HEK293 (cell line): ENCODE measurements at regions of chr3 and their contacts with region 1.

Region 1: GRCh38 chr3:9915254-9916141 is 1.4 kb upstream of the IL17RC start:
- H3K4me3 ChIP-seq: peak overlapping the region; percentile 4
- H3K27ac ChIP-seq: peak overlapping the region; percentile 54; the same call in 1 of the 2 replicates
- H3K4me1 ChIP-seq: peaks cover 19% of the 10 kb centered on the region
- CTCF ChIP-seq: no peak

Region 2: DNA sequence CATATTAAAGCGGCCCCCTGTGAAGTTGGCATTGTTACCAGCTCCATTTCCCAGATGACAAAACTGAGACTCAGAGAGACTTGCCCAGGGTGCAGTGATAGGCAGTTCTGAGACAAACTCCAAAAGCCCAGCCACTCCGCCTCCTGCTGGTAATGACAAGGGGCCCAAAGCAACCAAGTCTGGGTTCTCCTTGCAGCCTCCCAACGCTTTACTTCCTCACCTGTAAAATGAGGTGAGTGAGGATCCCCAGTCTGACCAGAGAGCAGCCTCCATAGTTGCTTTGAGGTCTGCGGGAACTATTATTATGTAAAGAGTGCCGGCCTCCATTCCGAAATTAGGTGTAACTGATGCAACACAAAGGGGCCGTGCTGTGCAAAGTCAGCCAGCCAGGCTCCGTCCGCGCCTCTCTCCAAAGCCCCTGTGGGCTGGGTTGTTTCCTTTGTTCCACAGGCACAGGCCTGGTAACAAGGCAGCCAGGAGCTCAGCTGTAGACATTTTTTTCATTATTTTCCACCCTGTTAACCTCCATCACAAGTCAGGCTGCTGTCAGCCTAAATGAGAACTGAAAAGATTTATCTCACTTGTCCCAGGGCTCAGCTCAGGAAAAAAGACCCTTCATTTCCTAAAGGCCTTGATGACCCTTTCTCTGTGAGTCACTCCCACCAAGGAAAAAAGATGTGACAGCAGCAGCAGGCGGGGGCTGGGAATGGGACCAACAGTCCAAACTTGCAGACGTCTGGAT is 813.1 kb before region 1 on chr3:
- CTCF ChIA-PET with region 1: no interaction called
- POLR2A ChIA-PET with region 1: no interaction called
- H3K4me3 ChIP-seq: no peak overlapping the region
- H3K27ac ChIP-seq: no peak overlapping the region
- H3K4me1 ChIP-seq: peaks cover 3% of the 10 kb centered on the region; the same call in 1 of the 2 replicates
- CTCF ChIP-seq: no peak

Region 3: DNA sequence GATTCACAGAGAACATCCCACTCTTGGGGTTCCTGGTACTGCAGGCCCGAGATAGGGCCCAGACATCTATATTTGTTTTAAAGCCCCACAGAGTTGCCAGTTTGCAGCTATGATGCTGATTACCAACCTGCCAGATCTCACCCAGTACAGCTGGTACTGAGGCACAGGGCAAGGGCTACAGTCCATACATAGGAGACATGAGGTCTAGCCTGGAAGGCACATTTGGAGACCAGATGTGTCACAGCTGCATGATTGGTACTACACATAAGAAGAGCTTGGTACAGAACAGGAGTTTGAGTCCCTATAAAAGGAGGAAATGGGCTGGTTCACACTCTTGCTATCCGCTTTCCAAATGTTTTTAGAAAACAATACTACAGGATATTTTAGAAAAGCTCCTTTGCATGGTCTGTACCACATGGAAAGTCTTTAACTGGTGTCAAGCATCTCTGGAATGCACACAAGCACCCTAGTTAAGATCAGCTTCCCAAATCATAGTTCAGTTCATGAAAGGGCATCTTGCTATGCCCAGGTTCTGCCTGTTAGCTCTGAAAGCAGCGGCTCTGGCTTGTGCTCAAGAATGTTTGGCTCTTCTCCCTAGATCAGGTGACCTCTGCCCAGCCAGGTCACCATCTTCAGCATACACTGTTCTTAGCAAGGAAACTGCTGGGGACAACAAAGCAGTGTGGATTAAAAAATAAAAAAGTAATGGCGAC is 245.6 kb before region 1 on chr3:
- CTCF ChIA-PET with region 1: no interaction called
- POLR2A ChIA-PET with region 1: no interaction called
- H3K4me3 ChIP-seq: no peak overlapping the region
- H3K27ac ChIP-seq: no peak overlapping the region
- H3K4me1 ChIP-seq: no peaks in the 10 kb centered on the region
- CTCF ChIP-seq: no peak

Region 4: DNA sequence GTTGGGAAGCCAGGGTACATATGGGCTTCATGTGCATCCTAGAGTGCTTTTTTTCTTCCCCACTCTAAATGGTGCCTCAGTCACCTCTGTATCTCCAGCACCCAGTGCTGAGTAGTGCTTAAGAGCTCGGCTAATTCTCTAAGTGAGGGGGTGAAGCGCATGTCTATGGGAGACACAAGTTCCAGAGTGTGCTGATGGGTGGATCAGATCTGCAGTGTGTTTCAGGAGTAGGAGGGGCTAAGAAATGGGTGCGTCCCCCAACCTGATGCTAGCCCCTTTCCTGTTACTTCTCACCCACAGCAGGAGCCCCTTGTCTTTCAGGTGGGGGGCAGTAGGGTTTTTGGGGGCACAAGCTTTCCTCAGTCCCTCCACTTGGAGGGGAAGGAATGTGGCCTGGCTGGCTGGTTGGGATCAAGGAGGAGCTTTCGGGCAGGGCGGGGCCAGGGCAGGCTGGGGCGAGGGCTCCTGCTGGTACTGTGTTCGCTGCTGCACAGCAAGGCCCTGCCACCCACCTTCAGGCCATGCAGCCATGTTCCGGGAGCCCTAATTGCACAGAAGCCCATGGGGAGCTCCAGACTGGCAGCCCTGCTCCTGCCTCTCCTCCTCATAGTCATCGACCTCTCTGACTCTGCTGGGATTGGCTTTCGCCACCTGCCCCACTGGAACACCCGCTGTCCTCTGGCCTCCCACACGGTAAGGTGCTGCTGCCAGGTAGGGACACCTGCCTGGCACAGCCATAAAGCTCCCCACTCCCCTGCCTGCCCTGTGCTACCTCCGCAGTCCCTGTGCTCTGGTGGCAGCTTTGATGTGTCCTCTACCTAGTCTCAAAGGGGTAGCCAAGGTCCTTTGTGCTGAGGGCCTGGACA is 12.9 kb before region 1 on chr3 and contains the start of gene IL17RE:
- CTCF ChIA-PET with region 1: interaction called, 3 read pairs
- POLR2A ChIA-PET with region 1: interaction called, 11 read pairs
- H3K4me3 ChIP-seq: peak within 1 kb of the TSS; percentile 11
- H3K27ac ChIP-seq: no peak within 1 kb of the TSS
- H3K4me1 ChIP-seq: no peaks in the 10 kb centered on the region
- CTCF ChIP-seq: no peak

Region 5: GRCh38 chr3:9946112-9947024 is 30.9 kb after region 1 on chr3:
- CTCF ChIA-PET with region 1: interaction called, 16 read pairs
- POLR2A ChIA-PET with region 1: interaction called, 5 read pairs
- H3K4me3 ChIP-seq: peak overlapping the region; percentile 50
- H3K27ac ChIP-seq: peak overlapping the region; percentile 69; the same call in 1 of the 2 replicates
- H3K4me1 ChIP-seq: no peaks in the 10 kb centered on the region
- CTCF ChIP-seq: peak; percentile 51